Activated CD4-positive, alpha-beta T cell treated with anti-CD3 and anti-CD28 coated beads for 36 hours (primary cell): ENCODE measurements at regions of chr1 and their contacts with region 1.

Region 1: DNA sequence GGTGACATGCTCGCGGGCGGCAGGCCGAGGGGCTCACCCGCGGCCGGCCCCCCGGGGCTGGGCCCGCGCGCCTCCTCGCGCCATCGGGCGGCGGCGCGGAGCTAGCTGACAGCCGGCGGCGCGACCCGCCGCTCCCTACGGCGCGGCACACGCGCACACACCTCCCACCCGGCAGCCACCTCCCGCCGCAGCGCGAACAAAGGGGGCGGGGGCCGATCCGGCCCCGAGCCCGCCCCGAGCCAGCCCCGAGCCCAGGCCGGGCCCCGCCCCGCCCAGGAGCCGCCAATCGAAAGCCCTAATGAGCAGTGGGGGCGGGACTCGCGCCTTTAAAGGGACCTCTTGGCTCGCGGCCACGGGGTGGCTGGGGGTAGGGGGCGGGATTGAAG is at the start of gene KIF21B:
- DNase-seq: peak; percentile 95
- ATAC-seq: peak; percentile 64
- H3K4me3 Mint-ChIP-seq: peak within 1 kb of the TSS; percentile 99
- H3K27ac Mint-ChIP-seq: peak within 1 kb of the TSS; percentile 99
- H3K4me1 Mint-ChIP-seq: peaks cover 77% of the 10 kb centered on the region
- H3K27me3 Mint-ChIP-seq: no peaks in the 10 kb centered on the region
- total RNA-seq, gene KIF21B: 62.8 to 67.1 TPM

Region 2: GRCh38 chr1:200409761-200410565 is 613.5 kb before region 1 on chr1 and contains the start of gene ZNF281:
- CTCF ChIA-PET with region 1: no interaction called
- POLR2A ChIA-PET with region 1: no interaction called
- intact Hi-C with region 1: loop called in 1 of 2 experiments (anchors 10 kb)
- DNase-seq: peak; percentile 97
- ATAC-seq: peak; percentile 99
- H3K4me3 Mint-ChIP-seq: peak within 1 kb of the TSS; percentile 80
- H3K27ac Mint-ChIP-seq: peak within 1 kb of the TSS; percentile 93
- H3K4me1 Mint-ChIP-seq: peaks cover 49% of the 10 kb centered on the region
- H3K27me3 Mint-ChIP-seq: no peaks in the 10 kb centered on the region
- total RNA-seq, gene ZNF281: 10.8 to 13.5 TPM

Region 3: GRCh38 chr1:200738740-200739498 is 284.6 kb before region 1 on chr1 and contains the start of gene CAMSAP2:
- CTCF ChIA-PET with region 1: no interaction called
- POLR2A ChIA-PET with region 1: no interaction called
- intact Hi-C with region 1: loop called in 1 of 2 experiments (anchors 5 kb)
- DNase-seq: peak; percentile 74
- ATAC-seq: peak; percentile 51
- H3K4me3 Mint-ChIP-seq: peak within 1 kb of the TSS; percentile 91
- H3K27ac Mint-ChIP-seq: peak within 1 kb of the TSS; percentile 90
- H3K4me1 Mint-ChIP-seq: peaks cover 44% of the 10 kb centered on the region
- H3K27me3 Mint-ChIP-seq: peaks cover 4% of the 10 kb centered on the region
- total RNA-seq, gene CAMSAP2: 2.3 to 3.0 TPM

Region 4: DNA sequence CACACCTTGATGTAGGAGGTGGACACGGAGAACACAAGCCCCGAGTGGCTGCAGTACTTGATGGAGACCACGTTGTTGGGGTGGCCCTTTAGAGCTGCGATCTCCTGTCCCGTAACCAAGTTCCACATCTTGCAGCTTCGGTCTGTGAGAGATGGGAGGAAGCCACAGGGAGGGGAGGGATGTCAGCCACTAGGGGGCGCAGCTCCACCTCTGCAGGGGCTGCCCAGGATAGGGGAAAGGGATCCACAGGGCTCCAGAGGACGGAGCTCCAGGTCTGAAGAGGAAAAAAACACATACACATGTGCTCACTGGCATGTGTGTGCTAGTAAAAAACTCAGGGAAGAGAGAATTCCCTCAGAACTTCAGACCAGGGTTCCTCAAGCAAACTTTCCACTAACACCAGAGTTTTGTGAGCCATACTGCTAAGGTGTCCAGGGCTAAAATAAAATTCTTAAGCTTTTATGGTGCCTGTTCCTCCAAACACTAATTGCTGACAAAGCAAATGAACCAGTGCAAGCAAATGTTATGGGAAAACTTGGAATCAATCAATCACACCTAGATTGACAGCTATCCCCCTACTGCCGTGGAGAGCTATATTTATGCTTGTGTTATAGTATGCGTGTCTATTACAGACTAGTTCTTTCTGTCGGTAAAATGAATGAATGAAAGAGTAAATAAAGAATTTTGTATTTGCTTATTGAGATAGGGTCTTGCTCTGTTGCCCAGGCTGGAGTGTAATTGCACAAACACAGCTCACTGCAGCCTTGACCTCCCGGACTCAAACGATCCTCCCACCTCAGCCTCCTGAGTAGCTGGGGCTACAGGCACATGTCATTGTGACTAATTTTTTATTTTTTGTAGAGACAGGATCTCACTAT is 43.7 kb before region 1 on chr1:
- CTCF ChIA-PET with region 1: interaction called, 13 read pairs
- POLR2A ChIA-PET with region 1: no interaction called
- intact Hi-C with region 1: loop called in 1 of 2 experiments (anchors 1 kb)
- DNase-seq: peak; percentile 86
- ATAC-seq: peak; percentile 69
- H3K4me3 Mint-ChIP-seq: no peak overlapping the region
- H3K27ac Mint-ChIP-seq: no peak overlapping the region
- H3K4me1 Mint-ChIP-seq: no peaks in the 10 kb centered on the region
- H3K27me3 Mint-ChIP-seq: no peaks in the 10 kb centered on the region

Region 5: GRCh38 chr1:201154389-201155165 is 131.1 kb after region 1 on chr1 and contains the start of gene TMEM9:
- CTCF ChIA-PET with region 1: interaction called, 3 read pairs
- POLR2A ChIA-PET with region 1: no interaction called
- intact Hi-C with region 1: loop called in 1 of 2 experiments (anchors 1 kb)
- DNase-seq: peak; percentile 99
- ATAC-seq: peak; percentile 96
- H3K4me3 Mint-ChIP-seq: peak within 1 kb of the TSS; percentile 78
- H3K27ac Mint-ChIP-seq: peak within 1 kb of the TSS; percentile 85
- H3K4me1 Mint-ChIP-seq: peaks cover 18% of the 10 kb centered on the region
- H3K27me3 Mint-ChIP-seq: peaks cover 4% of the 10 kb centered on the region
- total RNA-seq, gene TMEM9: 15.7 to 27.2 TPM

Region 6: DNA sequence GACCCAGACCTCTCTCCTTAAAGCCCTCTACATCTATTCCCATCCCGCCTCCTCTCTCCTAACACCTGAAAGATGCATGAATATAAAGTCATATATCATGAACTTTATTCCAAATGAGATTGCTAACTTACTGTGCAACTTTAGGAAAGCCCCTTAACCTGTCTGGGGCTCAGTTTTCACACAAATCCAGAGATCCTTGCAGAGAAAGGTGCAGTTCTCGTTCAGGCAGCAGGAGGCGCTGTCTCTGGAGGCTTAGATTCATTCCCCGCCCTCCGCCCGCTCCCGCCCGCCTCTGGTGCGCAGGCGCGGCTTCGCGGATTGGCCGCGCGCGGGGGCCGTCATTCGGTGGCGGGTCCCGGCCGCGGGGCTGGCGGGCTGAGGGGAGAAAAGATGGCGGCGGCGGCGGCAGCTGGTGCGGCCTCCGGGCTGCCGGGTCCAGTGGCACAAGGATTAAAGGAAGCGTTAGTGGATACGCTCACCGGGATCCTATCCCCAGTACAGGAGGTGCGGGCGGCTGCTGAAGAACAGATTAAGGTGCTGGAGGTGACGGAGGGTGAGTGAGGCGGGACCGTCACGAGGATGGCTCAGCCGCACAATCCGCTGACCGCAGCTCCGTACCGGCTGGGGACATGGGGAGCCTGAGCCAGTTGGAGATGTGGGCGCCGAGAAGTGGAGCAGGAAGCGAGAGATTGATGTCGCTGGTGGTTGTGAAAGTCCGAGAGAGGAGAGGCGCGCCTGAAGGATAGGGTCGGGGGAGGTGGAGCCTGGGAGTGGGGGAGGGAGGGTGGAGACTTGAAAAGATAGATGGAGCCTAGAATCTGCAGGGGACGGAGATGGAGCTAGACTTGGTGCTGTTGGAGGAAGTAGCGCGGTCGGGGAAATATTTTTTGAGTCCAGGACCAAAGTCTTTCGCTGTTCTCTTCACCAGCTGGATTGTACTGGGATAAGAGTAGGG is 805.6 kb after region 1 on chr1 and contains the start of gene IPO9:
- CTCF ChIA-PET with region 1: no interaction called
- POLR2A ChIA-PET with region 1: no interaction called
- intact Hi-C with region 1: loop called in 1 of 2 experiments (anchors 2 kb)
- DNase-seq: peak; percentile 97
- ATAC-seq: peak; percentile 94
- H3K4me3 Mint-ChIP-seq: peak within 1 kb of the TSS; percentile 99
- H3K27ac Mint-ChIP-seq: peak within 1 kb of the TSS; percentile 98
- H3K4me1 Mint-ChIP-seq: peaks cover 37% of the 10 kb centered on the region
- H3K27me3 Mint-ChIP-seq: no peaks in the 10 kb centered on the region
- total RNA-seq, gene IPO9: 65.1 to 66.0 TPM